Endothelial cell of umbilical vein (primary cell): ENCODE measurements at regions of chr11 and their contacts with region 1.

Region 1: GRCh38 chr11:116787786-116788486 is at the start of gene ZPR1:
- DNase-seq: peak; percentile 79
- H3K4me3 ChIP-seq: peak within 1 kb of the TSS; percentile 76 to 92 (median 88)
- H3K27ac ChIP-seq: peak within 1 kb of the TSS; percentile 52
- H3K4me1 ChIP-seq: peaks cover 13% of the 10 kb centered on the region
- H3K27me3 ChIP-seq: no peaks in the 10 kb centered on the region
- CTCF ChIP-seq: no peak
- POLR2A ChIP-seq: peak; percentile 97
- total RNA-seq, gene ZPR1: 48.6 and 54.5 TPM in 2 replicates

Region 2: GRCh38 chr11:116772443-116773202 is 15.3 kb before region 1 on chr11 and contains the start of gene BUD13:
- CTCF ChIA-PET with region 1: interaction called, 7 read pairs
- POLR2A ChIA-PET with region 1: no interaction called
- dilution Hi-C with region 1: no loop called
- intact Hi-C with region 1: loop called (anchors 1 kb)
- DNase-seq: peak; percentile 86
- H3K4me3 ChIP-seq: peak within 1 kb of the TSS; percentile 65 to 97 (median 96)
- H3K27ac ChIP-seq: peak within 1 kb of the TSS; percentile 89
- H3K4me1 ChIP-seq: peaks cover 12% of the 10 kb centered on the region
- H3K27me3 ChIP-seq: no peaks in the 10 kb centered on the region
- CTCF ChIP-seq: no peak
- POLR2A ChIP-seq: peak; percentile 84
- total RNA-seq, gene BUD13: 21.8 and 22.2 TPM in 2 replicates

Region 3: DNA sequence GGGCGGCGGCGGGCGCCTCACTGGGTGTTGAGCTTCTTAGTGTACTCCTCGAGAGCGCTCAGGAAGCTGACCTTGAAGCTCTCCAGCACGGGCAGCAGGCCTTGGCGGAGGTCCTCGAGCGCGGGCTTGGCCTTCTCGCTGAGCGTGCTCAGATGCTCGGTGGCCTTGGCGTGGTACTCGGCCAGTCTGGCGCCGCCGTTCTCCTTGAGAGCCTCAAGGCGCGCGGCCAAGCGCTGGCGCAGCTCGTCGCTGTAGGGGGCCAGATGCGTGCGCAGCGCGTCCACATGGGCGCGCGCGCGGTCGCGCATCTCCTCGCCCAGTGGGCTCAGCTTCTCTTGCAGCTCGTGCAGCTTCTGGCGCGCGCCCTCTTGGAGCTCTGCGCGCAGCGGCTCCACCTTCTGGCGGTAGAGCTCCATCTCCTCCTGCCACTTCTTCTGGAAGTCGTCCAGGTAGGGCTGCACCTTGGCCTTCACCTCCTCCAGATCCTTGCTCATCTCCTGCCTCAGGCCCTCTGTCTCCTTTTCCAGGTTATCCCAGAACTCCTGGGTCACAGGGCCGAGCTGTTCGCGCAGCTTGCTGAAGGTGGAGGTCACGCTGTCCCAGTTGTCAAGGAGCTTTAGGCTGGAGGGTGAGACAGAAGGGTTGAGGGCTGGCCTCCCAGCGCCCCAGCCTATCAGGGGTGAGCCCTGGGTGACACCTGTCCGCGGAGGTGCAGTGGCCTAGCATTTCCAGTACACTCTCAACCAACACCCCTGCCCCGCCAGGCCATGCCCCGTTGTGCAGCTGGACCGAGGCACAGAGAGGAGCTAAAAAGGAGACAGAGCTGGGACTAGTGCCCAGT is 48.1 kb after region 1 on chr11:
- CTCF ChIA-PET with region 1: interaction called, 272 read pairs
- POLR2A ChIA-PET with region 1: interaction called, 4 read pairs
- dilution Hi-C with region 1: no loop called
- intact Hi-C with region 1: loop called (anchors 1 kb)
- DNase-seq: peak; percentile 94
- H3K4me3 ChIP-seq: peak overlapping the region; percentile 1 to 32 (median 15)
- H3K27ac ChIP-seq: no peak overlapping the region
- H3K4me1 ChIP-seq: peaks cover 6% of the 10 kb centered on the region
- H3K27me3 ChIP-seq: no peaks in the 10 kb centered on the region
- CTCF ChIP-seq: peak; percentile 56 to 81
- POLR2A ChIP-seq: no peak

Region 4: DNA sequence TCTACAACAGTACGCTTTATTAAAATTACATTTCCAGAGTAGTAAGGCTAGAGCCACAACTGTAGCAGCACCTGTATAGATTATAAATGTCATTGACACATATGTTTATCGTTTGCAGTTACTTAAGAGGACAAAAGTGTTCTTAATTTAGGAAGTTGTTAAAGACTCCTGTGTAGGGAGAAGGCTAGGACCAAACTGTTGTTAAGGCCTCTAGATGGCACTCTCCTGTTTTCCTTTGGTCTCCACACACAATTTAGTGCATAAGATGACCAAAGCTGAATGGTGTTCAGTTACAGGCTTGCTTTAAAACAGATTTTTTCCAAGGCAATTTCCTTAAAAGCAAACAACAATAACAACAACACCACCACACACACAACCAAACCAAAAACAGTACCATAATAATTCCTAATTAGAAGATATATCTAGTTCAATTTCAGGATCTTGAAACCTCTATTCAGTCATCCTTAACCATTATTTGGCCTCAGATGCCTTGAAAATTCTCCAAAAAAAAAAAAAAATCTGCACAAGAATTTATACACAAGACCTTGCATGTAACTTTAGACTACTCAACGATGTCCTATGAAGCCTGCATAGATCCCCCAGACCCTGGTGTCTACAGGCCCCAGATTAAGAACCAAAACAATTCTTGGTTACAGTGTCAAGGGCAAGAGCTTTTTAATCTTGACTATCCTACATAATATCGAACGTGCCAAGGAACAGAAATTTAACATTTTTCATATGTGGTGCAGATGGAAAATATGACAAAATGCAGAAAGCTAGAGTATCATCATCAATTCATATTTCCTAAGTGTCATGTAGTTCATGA is 92.1 kb after region 1 on chr11:
- CTCF ChIA-PET with region 1: interaction called, 41 read pairs
- POLR2A ChIA-PET with region 1: no interaction called
- dilution Hi-C with region 1: no loop called
- intact Hi-C with region 1: loop called (anchors 1 kb)
- DNase-seq: peak; percentile 76
- H3K4me3 ChIP-seq: no peak overlapping the region
- H3K27ac ChIP-seq: no peak overlapping the region
- H3K4me1 ChIP-seq: no peaks in the 10 kb centered on the region
- H3K27me3 ChIP-seq: no peaks in the 10 kb centered on the region
- CTCF ChIP-seq: peak; percentile 55 to 68
- POLR2A ChIP-seq: no peak

Region 5: GRCh38 chr11:117117681-117118080 is 329.7 kb after region 1 on chr11:
- CTCF ChIA-PET with region 1: interaction called, 11 read pairs
- POLR2A ChIA-PET with region 1: no interaction called
- dilution Hi-C with region 1: no loop called
- intact Hi-C with region 1: no loop called
- DNase-seq: peak; percentile 64
- H3K4me3 ChIP-seq: no peak overlapping the region
- H3K27ac ChIP-seq: no peak overlapping the region
- H3K4me1 ChIP-seq: no peaks in the 10 kb centered on the region
- H3K27me3 ChIP-seq: no peaks in the 10 kb centered on the region
- CTCF ChIP-seq: no peak
- POLR2A ChIP-seq: no peak

Region 6: DNA sequence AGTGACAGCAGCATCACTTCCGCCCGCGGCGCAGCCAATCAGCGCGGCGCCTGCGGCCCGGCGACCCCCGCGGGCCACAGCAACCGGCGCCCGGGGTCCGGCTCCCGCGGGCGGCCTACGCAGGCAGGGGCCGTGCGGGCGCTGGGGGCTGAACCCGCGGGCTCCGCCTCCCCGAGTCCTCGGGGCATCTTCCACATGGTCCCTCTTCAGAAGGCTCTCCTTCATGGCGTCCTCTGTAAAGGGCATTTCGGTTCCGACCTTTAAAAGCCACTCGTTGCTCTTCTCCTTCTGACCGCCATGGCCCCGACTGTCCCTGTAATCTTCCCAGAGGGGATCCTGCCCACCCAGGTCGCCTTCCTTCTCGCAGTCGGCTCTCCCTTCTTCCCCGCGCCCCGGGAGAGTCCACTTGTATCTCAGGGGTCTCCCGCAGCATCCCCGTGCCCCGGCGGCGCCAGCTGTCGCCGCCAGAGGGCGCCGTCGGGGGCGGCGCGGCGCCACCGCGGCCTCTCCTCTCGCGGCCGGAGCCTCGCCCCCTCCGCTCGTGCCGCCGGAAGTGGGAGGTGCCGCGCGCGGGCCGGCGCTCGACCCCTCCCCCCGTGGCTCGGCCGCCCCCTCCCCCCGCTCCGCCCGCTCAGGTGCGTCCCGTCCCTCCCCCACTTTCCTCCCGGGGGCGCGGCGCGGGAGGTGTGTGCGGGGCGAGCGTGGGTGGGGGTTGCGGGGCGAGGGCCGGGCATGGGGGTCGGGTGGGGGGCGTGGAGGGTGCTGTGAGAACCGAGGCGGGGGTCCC is 444.3 kb after region 1 on chr11 and contains the start of gene RNF214:
- CTCF ChIA-PET with region 1: interaction called, 63 read pairs
- POLR2A ChIA-PET with region 1: no interaction called
- dilution Hi-C with region 1: no loop called
- intact Hi-C with region 1: no loop called
- DNase-seq: peak; percentile 79
- H3K4me3 ChIP-seq: peak within 1 kb of the TSS; percentile 82 to 97 (median 90)
- H3K27ac ChIP-seq: peak within 1 kb of the TSS; percentile 89
- H3K4me1 ChIP-seq: peaks cover 20% of the 10 kb centered on the region
- H3K27me3 ChIP-seq: no peaks in the 10 kb centered on the region
- CTCF ChIP-seq: peak; percentile 81 to 99
- POLR2A ChIP-seq: peak; percentile 49
- total RNA-seq, gene RNF214: 26.1 and 28.2 TPM in 2 replicates